G401 (cell line): ENCODE measurements at regions of chr3 and their contacts with region 1.

Region 1: GRCh38 chr3:136752422-136753325 is 496 bp upstream of the STAG1 start:
- DNase-seq: peak; percentile 97

Region 2: GRCh38 chr3:135539351-135539750 is 1213.3 kb before region 1 on chr3:
- in situ Hi-C with region 1: no loop called
- DNase-seq: no peak

Region 3: GRCh38 chr3:136651581-136651980 is 101.1 kb before region 1 on chr3:
- in situ Hi-C with region 1: no loop called
- DNase-seq: no peak

Region 4: GRCh38 chr3:137013955-137014688 is 261.4 kb after region 1 on chr3:
- in situ Hi-C with region 1: loop called (anchors 25 kb)
- DNase-seq: peak; percentile 93